Ascending aorta (tissue), 2 donors: ENCODE measurements at regions of chr9 and their contacts with region 1.

Region 1: DNA sequence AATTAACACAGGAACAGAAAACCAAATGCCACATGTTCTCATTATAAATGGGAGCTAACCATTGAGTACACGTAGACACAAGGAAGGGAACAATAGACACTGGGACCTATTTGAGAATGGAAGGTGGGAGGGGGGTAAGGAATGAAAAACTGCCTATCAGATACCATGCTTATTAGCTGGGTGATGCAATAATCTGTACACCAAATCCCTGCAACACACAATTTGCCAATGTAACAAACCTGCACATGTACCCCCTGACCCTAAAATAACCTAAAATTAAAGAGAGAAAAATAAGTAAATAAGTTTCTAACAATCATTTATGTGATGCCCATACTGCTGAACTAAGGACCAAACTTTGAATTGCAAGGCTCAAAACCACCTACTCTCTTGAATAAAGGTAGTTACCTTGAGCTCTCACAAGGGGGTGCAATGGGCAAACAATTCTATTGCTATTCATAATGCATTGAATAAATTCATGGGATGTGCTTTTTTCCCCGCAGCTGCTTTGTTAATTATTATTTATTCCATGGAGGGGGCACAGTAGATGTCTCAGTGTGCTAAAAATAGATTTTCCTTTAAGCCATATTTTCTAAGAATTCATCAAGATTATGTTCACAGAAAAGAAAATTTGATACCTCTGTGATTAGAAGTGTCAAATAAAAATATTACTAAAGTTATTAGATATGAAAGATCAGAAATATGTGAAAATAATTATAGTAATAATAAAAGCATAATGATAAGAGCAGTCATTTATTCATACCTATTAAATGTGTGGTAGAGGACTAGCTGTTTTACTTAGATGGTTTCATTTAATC is 76.2 kb upstream of the PTPN3 start:
- DNase-seq: no peak
- H3K4me3 ChIP-seq: no peak overlapping the region
- H3K27ac ChIP-seq: no peak overlapping the region
- H3K4me1 ChIP-seq: no peaks in the 10 kb centered on the region
- H3K27me3 ChIP-seq: no peaks in the 10 kb centered on the region
- CTCF ChIP-seq: peak; percentile 64 to 79 (median 77)

Region 2: GRCh38 chr9:109264877-109265587 is 309.2 kb before region 1 on chr9:
- intact Hi-C with region 1: no loop called
- DNase-seq: peak in 1 of 2 donors; percentile 62
- H3K4me3 ChIP-seq: no peak overlapping the region
- H3K27ac ChIP-seq: no peak overlapping the region
- H3K4me1 ChIP-seq: no peaks in the 10 kb centered on the region
- H3K27me3 ChIP-seq: no peaks in the 10 kb centered on the region
- CTCF ChIP-seq: no peak

Region 3: GRCh38 chr9:109652964-109653363 is 78.7 kb after region 1 on chr9:
- intact Hi-C with region 1: loop called (anchors 1 kb)
- DNase-seq: no peak
- H3K4me3 ChIP-seq: no peak overlapping the region
- H3K27ac ChIP-seq: no peak overlapping the region
- H3K4me1 ChIP-seq: no peaks in the 10 kb centered on the region
- H3K27me3 ChIP-seq: no peaks in the 10 kb centered on the region
- CTCF ChIP-seq: peak; percentile 52 to 66 (median 53)

Region 4: GRCh38 chr9:109880277-109881169 is 306.2 kb after region 1 on chr9:
- intact Hi-C with region 1: loop called (anchors 10 kb)
- DNase-seq: no peak
- H3K4me3 ChIP-seq: no peak overlapping the region
- H3K27ac ChIP-seq: no peak overlapping the region
- H3K4me1 ChIP-seq: peaks cover 0 to 5% of the 10 kb centered on the region in 2 donors
- H3K27me3 ChIP-seq: no peaks in the 10 kb centered on the region
- CTCF ChIP-seq: peak; percentile 14 to 43 (median 40)